Activated CD8-positive, alpha-beta T cell treated with anti-CD3 and anti-CD28 coated beads, Interleukin-2, amount 10 ng/mL, durations not matched to agents 7 days and 5 days (primary cell): ENCODE measurements at regions of chr15 and their contacts with region 1.

Region 1: DNA sequence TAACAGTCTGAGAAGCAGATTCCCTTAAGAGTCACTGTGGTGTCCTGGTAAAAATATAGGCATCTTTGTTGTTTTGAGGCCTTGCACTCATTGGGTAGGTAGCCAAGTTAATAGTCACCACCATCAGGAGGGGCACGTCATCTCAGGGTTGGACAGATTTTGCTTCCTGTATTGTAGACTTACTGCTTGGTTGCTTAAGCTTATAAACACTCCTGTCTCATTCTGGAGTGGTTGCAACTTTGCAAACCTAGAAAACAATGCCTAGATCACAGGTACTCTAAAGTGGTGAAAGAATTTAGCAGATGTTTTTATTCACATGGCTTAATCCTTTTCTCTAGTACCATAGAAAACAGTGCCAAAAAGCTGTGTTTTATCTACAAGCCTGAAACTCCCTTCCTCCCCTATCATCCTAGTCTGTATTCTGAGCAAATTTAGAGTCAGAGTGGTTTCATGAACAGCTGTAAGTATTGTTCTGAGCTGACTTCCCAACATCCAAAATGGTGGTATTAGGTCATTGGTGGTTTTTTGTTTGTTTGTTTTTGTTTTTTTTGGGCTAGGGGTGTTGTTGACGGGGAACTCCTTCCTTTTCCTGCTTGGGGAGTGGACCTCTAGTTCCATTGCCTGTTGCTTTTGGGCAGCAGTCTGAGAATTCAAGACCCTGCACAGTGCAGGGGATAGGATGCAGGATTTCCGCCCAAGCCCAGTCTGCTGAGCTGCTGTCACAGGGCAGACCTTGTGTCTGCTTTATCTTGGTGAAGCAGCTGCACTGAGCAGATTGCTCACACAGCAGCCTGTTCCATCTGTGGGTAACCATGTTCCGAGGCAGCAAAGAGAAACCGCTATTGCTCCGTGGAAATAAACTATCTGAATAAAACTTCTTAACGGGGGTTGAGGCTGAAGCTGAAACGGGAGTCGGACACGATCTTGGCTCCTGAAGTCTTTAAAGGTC is 202.0 kb downstream of the AKAP13 start:
- DNase-seq: peak; percentile 82
- ATAC-seq: peak; percentile 90
- H3K4me3 Mint-ChIP-seq: peak overlapping the region; percentile 82
- H3K27ac Mint-ChIP-seq: peak overlapping the region; percentile 95
- H3K4me1 Mint-ChIP-seq: peaks cover 65% of the 10 kb centered on the region
- H3K27me3 Mint-ChIP-seq: no peaks in the 10 kb centered on the region

Region 2: GRCh38 chr15:85475317-85475701 is 107.1 kb before region 1 on chr15:
- CTCF ChIA-PET with region 1: no interaction called
- POLR2A ChIA-PET with region 1: no interaction called
- DNase-seq: no peak
- ATAC-seq: no peak
- H3K4me3 Mint-ChIP-seq: no peak overlapping the region
- H3K27ac Mint-ChIP-seq: no peak overlapping the region
- H3K4me1 Mint-ChIP-seq: peaks cover 31% of the 10 kb centered on the region
- H3K27me3 Mint-ChIP-seq: no peaks in the 10 kb centered on the region

Region 3: GRCh38 chr15:85504749-85505676 is 77.4 kb before region 1 on chr15:
- CTCF ChIA-PET with region 1: interaction called, 17 read pairs
- POLR2A ChIA-PET with region 1: no interaction called
- DNase-seq: peak; percentile 66
- ATAC-seq: no peak
- H3K4me3 Mint-ChIP-seq: no peak overlapping the region
- H3K27ac Mint-ChIP-seq: peak overlapping the region; percentile 28
- H3K4me1 Mint-ChIP-seq: peaks cover 10% of the 10 kb centered on the region
- H3K27me3 Mint-ChIP-seq: no peaks in the 10 kb centered on the region

Region 4: DNA sequence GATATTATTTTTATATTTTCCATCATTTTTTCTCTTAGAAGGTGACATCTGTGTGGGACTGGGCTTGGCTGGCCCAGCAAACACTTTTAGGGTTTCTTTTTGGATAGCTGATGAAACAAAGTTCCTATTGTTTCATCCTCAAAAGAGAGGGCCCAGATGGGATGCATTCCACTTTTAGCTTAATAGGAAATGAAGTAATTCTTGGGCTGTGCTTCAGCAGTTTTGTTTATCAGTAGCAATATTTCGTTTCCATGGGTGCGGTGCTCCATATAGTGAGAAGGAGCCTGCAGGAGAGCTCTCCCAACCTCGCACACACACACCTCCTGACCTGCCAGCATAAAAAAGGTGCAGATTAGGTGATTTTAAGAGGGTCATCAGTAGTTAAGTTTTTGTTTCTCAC is 54.5 kb before region 1 on chr15:
- CTCF ChIA-PET with region 1: no interaction called
- POLR2A ChIA-PET with region 1: no interaction called
- DNase-seq: no peak
- ATAC-seq: no peak
- H3K4me3 Mint-ChIP-seq: no peak overlapping the region
- H3K27ac Mint-ChIP-seq: no peak overlapping the region
- H3K4me1 Mint-ChIP-seq: peaks cover 15% of the 10 kb centered on the region
- H3K27me3 Mint-ChIP-seq: no peaks in the 10 kb centered on the region

Region 5: DNA sequence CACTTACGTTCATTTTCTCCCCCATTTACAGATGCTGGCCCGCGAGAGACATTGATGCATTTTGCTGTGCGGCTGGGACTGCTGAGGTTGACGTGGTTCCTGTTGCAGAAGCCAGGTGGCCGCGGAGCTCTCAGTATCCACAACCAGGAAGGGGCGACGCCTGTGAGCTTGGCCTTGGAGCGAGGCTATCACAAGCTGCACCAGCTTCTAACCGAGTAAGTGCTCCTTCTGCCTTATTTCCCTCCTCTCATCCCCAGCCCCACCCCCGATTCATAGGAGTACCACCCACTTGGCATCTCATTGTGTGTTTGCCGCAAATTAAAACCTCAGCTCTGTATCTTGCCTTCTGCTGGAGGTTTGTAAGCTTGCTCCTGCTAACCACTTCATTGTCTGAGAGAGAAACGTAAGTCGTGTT is 38.7 kb before region 1 on chr15:
- CTCF ChIA-PET with region 1: interaction called, 55 read pairs
- POLR2A ChIA-PET with region 1: interaction called, 20 read pairs
- DNase-seq: peak; percentile 76
- ATAC-seq: peak; percentile 86
- H3K4me3 Mint-ChIP-seq: peak overlapping the region; percentile 64
- H3K27ac Mint-ChIP-seq: peak overlapping the region; percentile 78
- H3K4me1 Mint-ChIP-seq: peaks cover 74% of the 10 kb centered on the region
- H3K27me3 Mint-ChIP-seq: no peaks in the 10 kb centered on the region

Region 6: GRCh38 chr15:85554852-85555521 is 27.4 kb before region 1 on chr15:
- CTCF ChIA-PET with region 1: interaction called, 13 read pairs
- POLR2A ChIA-PET with region 1: interaction called, 4 read pairs
- DNase-seq: no peak
- ATAC-seq: no peak
- H3K4me3 Mint-ChIP-seq: no peak overlapping the region
- H3K27ac Mint-ChIP-seq: no peak overlapping the region
- H3K4me1 Mint-ChIP-seq: peaks cover 50% of the 10 kb centered on the region
- H3K27me3 Mint-ChIP-seq: no peaks in the 10 kb centered on the region

Region 7: DNA sequence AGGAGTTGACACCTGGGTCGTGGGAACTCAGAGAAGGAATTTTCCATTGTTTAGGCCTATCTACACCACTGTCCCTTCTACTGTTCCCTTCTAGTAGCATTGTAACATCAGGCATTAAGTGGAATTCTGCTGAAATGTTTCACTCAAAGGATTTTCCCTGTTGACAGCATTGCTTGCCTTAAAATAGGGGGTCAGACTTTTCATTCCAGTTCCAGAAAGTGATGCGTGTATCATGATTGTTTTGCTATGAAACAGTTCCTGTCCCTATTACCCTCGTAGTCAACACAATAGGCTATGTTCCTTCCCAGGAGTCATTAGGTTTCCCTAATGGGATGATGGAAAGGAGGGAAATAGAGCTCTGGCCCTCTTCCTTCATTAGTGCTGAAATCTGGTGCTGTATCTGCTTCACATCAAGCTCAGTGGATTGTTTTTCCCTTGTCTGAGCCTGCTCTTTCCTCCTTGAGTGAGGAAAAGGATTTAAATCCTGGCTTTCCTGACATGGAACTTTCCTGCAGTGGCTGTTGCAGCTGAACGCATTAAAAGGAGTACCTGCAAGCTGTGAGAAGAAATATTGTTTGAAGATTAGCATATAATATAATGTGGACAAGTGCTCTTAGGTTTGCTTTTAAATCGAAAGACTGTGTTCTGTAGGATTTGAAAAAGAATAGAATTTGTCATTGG is 16.5 kb after region 1 on chr15:
- CTCF ChIA-PET with region 1: interaction called, 10 read pairs
- POLR2A ChIA-PET with region 1: interaction called, 5 read pairs
- DNase-seq: no peak
- ATAC-seq: no peak
- H3K4me3 Mint-ChIP-seq: no peak overlapping the region
- H3K27ac Mint-ChIP-seq: no peak overlapping the region
- H3K4me1 Mint-ChIP-seq: peaks cover 43% of the 10 kb centered on the region
- H3K27me3 Mint-ChIP-seq: no peaks in the 10 kb centered on the region

Region 8: DNA sequence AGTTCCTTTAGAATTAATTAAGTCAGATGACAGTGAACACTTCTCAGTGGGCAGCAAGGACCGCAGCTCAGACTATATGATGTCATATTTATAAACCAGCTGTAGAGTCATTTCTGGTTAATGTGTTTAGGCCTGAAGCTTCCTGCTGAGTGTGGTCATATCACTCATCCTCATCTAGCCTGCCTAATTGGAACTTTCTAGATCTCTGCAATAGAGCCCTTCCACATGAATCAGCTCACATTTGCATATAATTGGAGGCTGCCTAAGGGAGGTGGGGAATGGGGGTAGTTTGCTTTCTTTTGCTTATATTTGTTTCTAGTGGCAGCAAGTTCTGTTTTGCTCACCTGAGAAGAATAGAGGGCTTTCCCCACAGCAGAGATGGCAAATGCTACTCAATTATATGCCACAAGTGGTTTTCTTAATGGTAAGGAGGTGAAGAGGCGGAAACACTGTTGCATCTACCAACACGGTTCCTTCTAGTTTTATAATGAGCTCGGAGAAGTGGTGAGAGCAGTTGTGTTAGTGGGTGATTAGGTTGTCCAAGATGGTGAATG is 64.2 kb after region 1 on chr15:
- CTCF ChIA-PET with region 1: interaction called, 4 read pairs
- POLR2A ChIA-PET with region 1: interaction called, 12 read pairs
- DNase-seq: peak; percentile 61
- ATAC-seq: peak; percentile 81
- H3K4me3 Mint-ChIP-seq: peak overlapping the region; percentile 34
- H3K27ac Mint-ChIP-seq: peak overlapping the region; percentile 64
- H3K4me1 Mint-ChIP-seq: peaks cover 41% of the 10 kb centered on the region
- H3K27me3 Mint-ChIP-seq: no peaks in the 10 kb centered on the region